HEK293T (cell line): ENCODE measurements at regions of chrX and their contacts with region 1.

Region 1: GRCh38 chrX:57821703-57822375 is 88.4 kb downstream of the ZXDA start:
- DNase-seq: peak; percentile 34

Region 2: DNA sequence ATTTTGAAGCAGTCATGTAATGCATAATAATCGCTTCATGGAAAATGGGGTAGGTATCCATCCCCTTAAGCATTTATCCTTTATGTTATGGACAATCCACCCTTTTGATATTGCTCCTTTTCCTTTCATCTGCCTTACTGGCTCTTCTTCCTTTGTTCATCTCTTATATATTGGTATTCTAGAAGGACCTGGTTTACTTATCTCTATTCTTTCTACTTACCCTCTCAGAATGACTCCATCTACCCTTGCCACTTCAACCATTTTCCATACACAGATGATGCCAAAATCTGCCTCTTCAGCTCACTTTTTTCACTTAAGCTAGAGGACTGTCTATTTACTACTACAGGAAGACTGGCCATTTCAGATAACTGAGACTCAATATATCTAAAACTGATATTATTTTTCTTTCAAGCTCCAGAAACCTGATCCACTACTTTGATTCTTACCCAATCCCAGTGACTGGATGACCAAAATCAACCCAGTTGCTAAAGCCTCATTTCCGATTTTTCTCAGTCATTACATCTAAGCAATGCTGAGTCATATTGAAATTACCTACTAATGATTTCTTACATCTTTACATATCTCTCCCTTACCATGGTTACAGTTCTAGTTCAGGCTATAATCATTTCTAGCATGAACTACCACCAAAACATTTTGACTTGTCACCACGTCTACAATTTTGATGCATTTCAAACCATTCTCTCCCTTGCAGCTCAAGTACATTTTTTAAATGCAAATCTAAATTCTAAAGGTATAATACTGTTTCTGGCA is 441.6 kb before region 1 on chrX:
- CTCF ChIA-PET with region 1: no interaction called
- POLR2A ChIA-PET with region 1: no interaction called
- DNase-seq: no peak

Region 3: DNA sequence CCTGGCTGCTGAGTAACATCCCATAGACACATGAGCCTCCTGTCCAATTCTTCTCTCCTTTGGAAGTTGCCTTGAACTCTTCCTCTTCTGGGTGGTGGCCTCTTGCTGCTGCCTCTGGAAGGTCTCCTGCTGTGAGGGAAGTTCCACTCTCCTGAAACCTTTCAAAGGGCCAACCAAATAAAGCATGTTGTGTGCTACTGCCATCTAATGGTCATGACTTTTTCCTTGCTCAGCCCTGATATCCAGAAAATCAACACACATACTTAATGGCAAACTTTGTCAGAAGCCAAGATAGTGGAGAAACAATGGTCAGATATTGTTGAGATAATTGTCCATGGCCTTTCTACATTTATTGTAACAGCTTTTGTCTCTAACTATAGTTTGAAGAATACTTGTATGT is 107.5 kb after region 1 on chrX:
- CTCF ChIA-PET with region 1: interaction called, 11 read pairs
- POLR2A ChIA-PET with region 1: no interaction called
- DNase-seq: peak; percentile 10